Endothelial cell of umbilical vein (primary cell): ENCODE measurements at regions of chr16 and their contacts with region 1.

Region 1: DNA sequence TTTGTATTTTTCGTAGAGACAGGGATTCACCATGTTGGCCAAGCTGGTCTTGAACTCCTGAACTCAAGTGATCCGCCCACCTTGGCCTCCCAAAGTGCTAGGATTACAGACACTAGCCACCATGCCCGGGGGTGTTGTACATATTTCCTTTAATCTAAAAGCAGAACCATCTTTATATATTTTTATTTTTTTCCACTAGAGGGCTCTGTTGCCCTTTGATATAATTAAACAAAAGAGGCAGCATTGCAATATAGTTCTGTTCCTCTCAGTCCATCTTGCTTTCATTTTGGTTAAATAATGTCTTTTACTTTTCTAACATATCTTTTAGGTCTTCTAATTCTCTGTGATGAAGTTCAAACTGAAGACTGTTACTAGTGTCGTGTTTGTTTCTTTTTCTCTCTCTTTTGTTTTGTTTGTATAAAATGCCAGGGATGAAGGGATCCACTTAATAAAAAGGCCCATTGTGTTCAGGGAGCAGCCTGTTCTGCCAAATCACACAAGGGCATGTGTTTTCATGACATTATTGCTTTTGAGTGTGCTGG is 23.4 kb downstream of the WWOX start:
- DNase-seq: peak; percentile 79
- H3K4me3 ChIP-seq: peak overlapping the region in 1 of 3 experiments; percentile 28
- H3K27ac ChIP-seq: peak overlapping the region; percentile 18
- H3K4me1 ChIP-seq: no peaks in the 10 kb centered on the region
- H3K27me3 ChIP-seq: no peaks in the 10 kb centered on the region
- CTCF ChIP-seq: peak in 1 of 2 donors; percentile 8
- POLR2A ChIP-seq: no peak

Region 2: DNA sequence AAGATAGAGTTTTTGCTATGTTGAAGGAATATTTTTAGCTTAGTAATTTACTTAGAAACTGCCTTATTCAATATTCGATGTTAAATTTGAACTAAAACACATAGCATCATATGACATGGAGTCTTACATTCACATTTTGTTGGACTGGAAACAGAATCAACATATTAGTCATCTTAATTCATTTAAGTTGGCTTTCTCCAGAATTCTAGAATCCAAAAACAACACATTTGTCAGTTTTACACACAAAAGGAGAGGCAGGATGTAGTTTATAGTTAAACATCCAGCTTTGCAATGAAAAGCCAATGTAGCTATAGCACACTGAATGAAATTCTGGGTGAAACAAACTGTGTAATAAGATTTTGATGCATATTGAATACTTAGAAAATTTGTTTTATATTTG is 19.9 kb after region 1 on chr16:
- CTCF ChIA-PET with region 1: interaction called, 10 read pairs
- POLR2A ChIA-PET with region 1: no interaction called
- dilution Hi-C with region 1: no loop called
- intact Hi-C with region 1: no loop called
- DNase-seq: peak; percentile 84
- H3K4me3 ChIP-seq: no peak overlapping the region
- H3K27ac ChIP-seq: peak overlapping the region; percentile 3
- H3K4me1 ChIP-seq: peaks cover 21% of the 10 kb centered on the region
- H3K27me3 ChIP-seq: no peaks in the 10 kb centered on the region
- CTCF ChIP-seq: no peak
- POLR2A ChIP-seq: no peak

Region 3: GRCh38 chr16:78163772-78164670 is 41.2 kb after region 1 on chr16:
- CTCF ChIA-PET with region 1: no interaction called
- POLR2A ChIA-PET with region 1: no interaction called
- dilution Hi-C with region 1: no loop called
- intact Hi-C with region 1: no loop called
- DNase-seq: no peak
- H3K4me3 ChIP-seq: no peak overlapping the region
- H3K27ac ChIP-seq: no peak overlapping the region
- H3K4me1 ChIP-seq: no peaks in the 10 kb centered on the region
- H3K27me3 ChIP-seq: no peaks in the 10 kb centered on the region
- CTCF ChIP-seq: no peak
- POLR2A ChIP-seq: no peak

Region 4: GRCh38 chr16:78235168-78235800 is 112.4 kb after region 1 on chr16:
- CTCF ChIA-PET with region 1: interaction called, 10 read pairs
- POLR2A ChIA-PET with region 1: no interaction called
- dilution Hi-C with region 1: no loop called
- intact Hi-C with region 1: loop called (anchors 1 kb)
- DNase-seq: peak; percentile 78
- H3K4me3 ChIP-seq: no peak overlapping the region
- H3K27ac ChIP-seq: no peak overlapping the region
- H3K4me1 ChIP-seq: no peaks in the 10 kb centered on the region
- H3K27me3 ChIP-seq: no peaks in the 10 kb centered on the region
- CTCF ChIP-seq: peak; percentile 89 to 96
- POLR2A ChIP-seq: no peak

Region 5: GRCh38 chr16:78365366-78365765 is 242.5 kb after region 1 on chr16:
- CTCF ChIA-PET with region 1: no interaction called
- POLR2A ChIA-PET with region 1: no interaction called
- dilution Hi-C with region 1: no loop called
- intact Hi-C with region 1: no loop called
- DNase-seq: no peak
- H3K4me3 ChIP-seq: no peak overlapping the region
- H3K27ac ChIP-seq: no peak overlapping the region
- H3K4me1 ChIP-seq: no peaks in the 10 kb centered on the region
- H3K27me3 ChIP-seq: no peaks in the 10 kb centered on the region
- CTCF ChIP-seq: no peak
- POLR2A ChIP-seq: no peak

Region 6: DNA sequence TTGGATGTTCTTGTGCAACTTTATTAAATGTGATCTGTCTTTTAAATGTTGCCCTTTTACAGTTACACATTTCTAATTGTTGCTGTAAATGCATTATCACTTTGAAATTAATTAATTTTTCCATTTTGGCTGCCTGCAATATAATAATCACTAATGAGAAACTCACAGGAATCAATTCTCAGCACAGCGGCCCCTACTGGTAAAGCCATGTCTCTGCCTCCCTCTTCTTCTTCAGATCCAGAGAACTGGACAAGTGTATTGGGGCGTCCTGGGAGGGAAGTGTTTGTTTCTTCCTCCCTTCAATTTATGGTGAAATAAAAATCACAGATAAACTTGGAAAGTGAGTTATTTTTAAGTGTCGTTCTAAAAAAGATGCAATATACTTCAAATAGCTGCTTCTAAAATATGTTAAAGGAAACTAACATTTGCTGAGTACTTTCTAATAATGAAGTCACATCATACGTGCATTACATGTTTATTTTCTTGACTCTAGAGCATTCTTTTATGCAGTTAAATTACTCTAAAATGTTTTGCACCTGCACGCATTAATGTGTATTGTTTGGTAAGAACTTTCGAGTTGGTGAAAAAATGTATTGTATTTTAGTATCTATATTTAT is 314.6 kb after region 1 on chr16:
- CTCF ChIA-PET with region 1: no interaction called
- POLR2A ChIA-PET with region 1: no interaction called
- dilution Hi-C with region 1: no loop called
- intact Hi-C with region 1: loop called (anchors 2 kb)
- DNase-seq: peak; percentile 2
- H3K4me3 ChIP-seq: no peak overlapping the region
- H3K27ac ChIP-seq: no peak overlapping the region
- H3K4me1 ChIP-seq: no peaks in the 10 kb centered on the region
- H3K27me3 ChIP-seq: no peaks in the 10 kb centered on the region
- CTCF ChIP-seq: peak; percentile 53 to 60
- POLR2A ChIP-seq: no peak

Region 7: DNA sequence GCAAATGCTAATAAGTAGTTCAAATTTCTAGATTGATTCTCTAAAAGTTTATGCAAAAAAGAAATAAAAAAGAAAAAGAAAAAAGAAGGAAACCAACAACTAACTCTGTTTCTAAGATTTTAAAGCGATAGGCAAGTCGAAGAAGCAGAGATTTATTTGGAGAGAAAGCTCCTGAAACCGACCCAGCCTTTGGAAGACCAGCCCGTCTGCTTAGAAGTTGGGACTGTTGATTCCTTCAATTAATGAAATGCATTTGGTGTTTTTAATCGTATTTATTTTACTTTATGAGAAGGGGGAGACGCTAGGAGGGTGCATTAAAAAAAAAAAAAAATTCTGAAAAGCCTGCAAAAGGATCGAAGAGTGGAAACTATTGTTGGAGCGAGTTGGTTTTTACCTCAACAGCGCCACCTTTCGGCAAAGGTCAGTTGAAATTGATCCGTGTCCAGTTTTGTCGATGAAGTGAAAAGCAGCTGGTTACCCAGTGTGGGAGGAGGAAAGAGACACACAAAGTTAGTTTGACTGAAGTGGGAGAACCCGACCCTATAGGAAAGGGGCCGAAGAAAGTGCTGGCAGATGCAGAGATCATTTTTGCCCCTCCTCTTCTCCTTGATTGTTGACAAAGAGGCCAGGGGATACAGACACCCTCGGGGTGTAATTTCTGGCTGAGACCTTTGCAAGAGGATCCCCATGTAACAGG is 1479.2 kb after region 1 on chr16:
- CTCF ChIA-PET with region 1: interaction called, 22 read pairs
- POLR2A ChIA-PET with region 1: no interaction called
- dilution Hi-C with region 1: no loop called
- intact Hi-C with region 1: no loop called
- DNase-seq: peak; percentile 64
- H3K4me3 ChIP-seq: no peak overlapping the region
- H3K27ac ChIP-seq: no peak overlapping the region
- H3K4me1 ChIP-seq: no peaks in the 10 kb centered on the region
- H3K27me3 ChIP-seq: peaks cover 22 to 33% of the 10 kb centered on the region in 2 experiments
- CTCF ChIP-seq: peak; percentile 68 to 74
- POLR2A ChIP-seq: no peak